Activated naive CD4-positive, alpha-beta T cell treated with anti-CD3 and anti-CD28 coated beads for 36 hours (primary cell): ENCODE measurements at regions of chr7 and their contacts with region 1.

Region 1: DNA sequence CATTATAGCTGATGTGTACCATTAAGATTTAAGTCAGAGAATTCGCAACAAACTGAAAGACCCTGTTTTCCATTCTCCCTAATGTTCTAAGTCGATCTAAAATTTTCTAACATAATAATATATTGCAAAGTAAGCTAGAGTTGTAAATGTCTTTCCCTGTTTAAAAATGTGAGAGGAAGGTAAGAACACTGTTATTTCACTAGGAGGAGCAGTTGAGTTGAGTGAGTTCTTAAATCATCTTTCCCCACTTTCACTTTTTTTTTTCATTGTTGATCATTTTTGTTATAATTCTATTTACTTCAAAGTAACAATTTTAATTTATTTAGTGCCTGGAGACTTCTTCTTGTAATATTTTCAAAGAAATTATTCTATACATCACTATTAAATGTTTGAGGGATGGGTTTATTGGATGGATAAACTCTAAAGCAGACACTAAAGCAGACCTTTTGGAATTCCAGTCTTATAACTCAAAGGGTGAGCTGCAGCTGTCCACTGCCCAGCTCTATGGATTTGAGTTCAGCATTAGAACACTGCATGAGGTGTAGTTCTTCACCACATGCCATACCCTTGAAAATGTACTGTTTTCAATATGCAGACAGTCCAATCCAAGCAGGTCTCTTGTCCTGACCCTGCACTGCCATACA is 181.3 kb upstream of the FZD1 start:
- DNase-seq: no peak
- H3K4me3 Mint-ChIP-seq: peak overlapping the region; percentile 13
- H3K27ac Mint-ChIP-seq: no peak overlapping the region
- H3K4me1 Mint-ChIP-seq: peaks cover 36% of the 10 kb centered on the region
- H3K27me3 Mint-ChIP-seq: no peaks in the 10 kb centered on the region

Region 2: GRCh38 chr7:90708841-90709317 is 374.1 kb before region 1 on chr7:
- CTCF ChIA-PET with region 1: no interaction called
- intact Hi-C with region 1: no loop called
- DNase-seq: peak; percentile 27
- H3K4me3 Mint-ChIP-seq: no peak overlapping the region
- H3K27ac Mint-ChIP-seq: no peak overlapping the region
- H3K4me1 Mint-ChIP-seq: no peaks in the 10 kb centered on the region
- H3K27me3 Mint-ChIP-seq: peaks cover 5% of the 10 kb centered on the region

Region 3: GRCh38 chr7:91784463-91784862 is 701.5 kb after region 1 on chr7:
- CTCF ChIA-PET with region 1: no interaction called
- intact Hi-C with region 1: loop called (anchors 2 kb)
- DNase-seq: no peak
- H3K4me3 Mint-ChIP-seq: no peak overlapping the region
- H3K27ac Mint-ChIP-seq: no peak overlapping the region
- H3K4me1 Mint-ChIP-seq: no peaks in the 10 kb centered on the region
- H3K27me3 Mint-ChIP-seq: no peaks in the 10 kb centered on the region